ENCODE measurements at regions of chr15 and their contacts with region 1.

Region 1: GRCh38 chr15:85412956-85413854 is 32.8 kb downstream of the AKAP13 start:
- DNase-seq: peak; percentile 92
- ATAC-seq: peak; percentile 99
- H3K4me3 Mint-ChIP-seq: peak overlapping the region; percentile 21
- H3K27ac Mint-ChIP-seq: peak overlapping the region; percentile 86
- H3K4me1 Mint-ChIP-seq: peaks cover 74% of the 10 kb centered on the region
- H3K27me3 Mint-ChIP-seq: no peaks in the 10 kb centered on the region

Region 2: GRCh38 chr15:85296615-85297402 is 116.4 kb before region 1 on chr15:
- CTCF ChIA-PET with region 1: interaction called, 57 read pairs
- DNase-seq: peak; percentile 84
- ATAC-seq: peak; percentile 100
- H3K4me3 Mint-ChIP-seq: peak overlapping the region; percentile 50
- H3K27ac Mint-ChIP-seq: peak overlapping the region; percentile 61
- H3K4me1 Mint-ChIP-seq: peaks cover 21% of the 10 kb centered on the region
- H3K27me3 Mint-ChIP-seq: peaks cover 1% of the 10 kb centered on the region

Region 3: DNA sequence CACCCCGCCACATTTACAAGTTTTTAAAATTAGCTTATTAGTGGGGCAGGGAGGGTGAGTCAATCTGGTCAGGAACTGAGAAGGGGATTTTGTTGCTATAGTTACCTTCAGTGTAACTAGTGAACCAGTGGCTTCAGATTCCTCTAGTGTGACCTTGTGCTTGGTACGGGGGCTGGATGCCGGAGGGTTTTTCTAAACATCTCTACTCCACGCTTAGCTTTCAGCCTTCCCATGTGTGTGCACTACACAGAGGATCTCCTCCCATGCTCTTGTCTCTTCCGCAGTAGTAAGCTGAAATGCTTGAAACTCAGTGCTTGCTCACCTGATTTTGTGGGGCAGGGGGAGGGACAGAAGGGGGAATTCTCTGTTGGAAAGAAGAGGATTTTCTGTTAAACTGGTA is 100.7 kb before region 1 on chr15:
- CTCF ChIA-PET with region 1: interaction called, 43 read pairs
- DNase-seq: peak; percentile 49
- ATAC-seq: peak; percentile 54
- H3K4me3 Mint-ChIP-seq: peak overlapping the region; percentile 34
- H3K27ac Mint-ChIP-seq: peak overlapping the region; percentile 65
- H3K4me1 Mint-ChIP-seq: peaks cover 63% of the 10 kb centered on the region
- H3K27me3 Mint-ChIP-seq: no peaks in the 10 kb centered on the region

Region 4: DNA sequence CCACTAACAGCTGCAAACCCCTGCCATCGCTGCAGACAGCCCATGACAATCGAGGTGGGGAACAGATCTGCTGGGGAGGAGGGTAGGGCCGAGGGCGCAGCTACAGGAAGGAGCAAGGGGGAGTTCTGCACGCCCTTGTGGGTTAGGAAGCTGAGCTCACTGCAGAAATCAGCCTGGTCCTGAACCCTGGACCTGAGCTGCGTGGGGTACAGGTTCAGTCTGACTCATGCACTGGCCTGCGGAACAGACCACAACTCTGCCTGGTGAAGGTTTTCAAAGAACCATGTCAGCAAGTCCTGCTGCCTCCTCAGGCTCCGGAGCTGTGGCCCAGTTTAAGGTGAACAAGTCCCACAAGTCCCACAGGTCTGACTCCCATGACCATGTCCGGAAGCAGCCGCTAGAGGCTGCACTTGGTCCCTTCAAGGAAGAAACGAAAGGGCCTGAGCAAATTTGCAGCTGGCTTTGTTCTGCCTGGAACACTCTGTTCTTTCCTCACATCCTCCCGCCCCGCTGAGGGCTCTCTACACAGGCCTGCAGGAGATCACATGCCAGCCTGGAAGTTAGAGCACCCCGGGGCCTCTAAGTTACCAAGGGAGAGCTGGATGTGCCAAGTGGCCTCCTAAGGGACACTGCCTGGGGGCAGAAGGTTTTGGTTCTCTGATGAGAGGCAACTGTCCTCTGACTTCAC is 82.2 kb before region 1 on chr15:
- CTCF ChIA-PET with region 1: interaction called, 136 read pairs
- DNase-seq: peak; percentile 98
- ATAC-seq: peak; percentile 84
- H3K4me3 Mint-ChIP-seq: peak overlapping the region; percentile 82
- H3K27ac Mint-ChIP-seq: peak overlapping the region; percentile 97
- H3K4me1 Mint-ChIP-seq: peaks cover 48% of the 10 kb centered on the region
- H3K27me3 Mint-ChIP-seq: no peaks in the 10 kb centered on the region

Region 5: DNA sequence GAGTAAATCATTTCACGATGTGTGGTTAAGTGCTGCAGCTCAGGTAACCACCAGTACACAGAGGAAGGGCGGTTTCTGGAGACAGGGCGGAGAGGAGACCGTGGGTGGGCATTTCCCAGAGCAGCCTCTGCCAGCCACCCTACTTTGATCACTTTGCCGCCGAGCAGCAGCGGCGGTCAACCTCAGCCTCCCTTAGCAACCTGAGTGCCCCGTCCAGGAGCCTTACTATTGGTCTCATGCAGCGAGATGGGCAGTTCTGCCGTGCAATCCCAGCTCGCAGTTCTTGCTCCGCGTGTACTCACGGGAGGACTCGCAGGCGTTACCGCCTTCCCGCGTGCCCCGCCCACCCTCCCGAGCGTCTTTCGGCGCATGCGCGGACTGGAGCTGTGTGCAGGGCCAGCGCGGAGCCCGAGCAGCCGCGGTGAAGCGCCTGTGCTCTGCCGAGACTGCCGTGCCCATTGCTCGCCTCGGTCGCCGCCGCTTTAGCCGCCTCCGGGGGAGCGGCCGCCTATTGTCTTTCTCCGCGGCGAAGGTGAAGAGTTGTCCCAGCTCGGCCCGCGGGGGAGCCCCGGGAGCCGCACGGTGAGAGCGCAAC is 32.9 kb before region 1 on chr15 and contains the start of gene AKAP13:
- CTCF ChIA-PET with region 1: interaction called, 14 read pairs
- DNase-seq: peak; percentile 99
- ATAC-seq: peak; percentile 86
- H3K4me3 Mint-ChIP-seq: peak within 1 kb of the TSS; percentile 78
- H3K27ac Mint-ChIP-seq: peak within 1 kb of the TSS; percentile 94
- H3K4me1 Mint-ChIP-seq: peaks cover 64% of the 10 kb centered on the region
- H3K27me3 Mint-ChIP-seq: peaks cover 2% of the 10 kb centered on the region
- total RNA-seq, gene AKAP13: 150 to 172 TPM